ENCODE measurements at regions of chr4 and their contacts with region 1.

Region 1: DNA sequence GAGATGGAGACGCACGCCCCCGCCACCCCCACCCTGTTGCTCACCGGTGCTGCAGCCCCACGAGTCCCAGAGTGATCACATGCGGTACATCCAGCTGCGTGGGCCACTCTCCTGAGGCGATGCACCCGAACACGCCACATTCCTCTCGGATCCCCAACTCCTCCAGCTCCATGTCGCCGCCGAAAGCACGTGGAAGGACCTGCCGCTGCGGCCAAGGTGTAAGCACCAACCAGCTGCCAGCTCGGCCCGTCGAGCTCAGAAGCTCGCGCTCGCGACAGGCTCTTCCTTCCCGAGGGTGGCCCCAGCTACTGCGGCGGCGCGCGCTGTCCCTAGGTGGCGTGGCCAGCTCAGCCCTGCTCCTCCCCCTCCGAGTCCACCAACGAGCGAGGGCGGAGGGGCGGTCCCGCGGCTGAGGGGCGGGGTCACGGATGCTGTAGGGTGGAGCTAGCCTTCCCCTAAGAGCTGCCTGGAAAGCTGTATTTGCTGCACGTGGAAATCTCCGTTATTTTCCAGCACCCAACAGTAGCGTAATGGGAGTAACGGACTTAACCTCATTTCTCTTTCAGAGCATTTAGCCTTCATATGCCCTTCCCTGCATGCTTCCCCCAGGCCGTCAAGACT is at the start of gene PPAT:
- DNase-seq: peak; percentile 99
- H3K4me3 Mint-ChIP-seq: peak within 1 kb of the TSS; percentile 98
- H3K27ac Mint-ChIP-seq: peak within 1 kb of the TSS; percentile 96
- H3K4me1 Mint-ChIP-seq: peaks cover 50% of the 10 kb centered on the region
- H3K27me3 Mint-ChIP-seq: no peaks in the 10 kb centered on the region
- total RNA-seq, gene PPAT: 35.2 to 40.6 TPM

Region 2: GRCh38 chr4:56261027-56261426 is 174.4 kb before region 1 on chr4:
- CTCF ChIA-PET with region 1: no interaction called
- intact Hi-C with region 1: no loop called
- DNase-seq: peak; percentile 56
- H3K4me3 Mint-ChIP-seq: no peak overlapping the region
- H3K27ac Mint-ChIP-seq: no peak overlapping the region
- H3K4me1 Mint-ChIP-seq: peaks cover 20% of the 10 kb centered on the region
- H3K27me3 Mint-ChIP-seq: peaks cover 9% of the 10 kb centered on the region

Region 3: DNA sequence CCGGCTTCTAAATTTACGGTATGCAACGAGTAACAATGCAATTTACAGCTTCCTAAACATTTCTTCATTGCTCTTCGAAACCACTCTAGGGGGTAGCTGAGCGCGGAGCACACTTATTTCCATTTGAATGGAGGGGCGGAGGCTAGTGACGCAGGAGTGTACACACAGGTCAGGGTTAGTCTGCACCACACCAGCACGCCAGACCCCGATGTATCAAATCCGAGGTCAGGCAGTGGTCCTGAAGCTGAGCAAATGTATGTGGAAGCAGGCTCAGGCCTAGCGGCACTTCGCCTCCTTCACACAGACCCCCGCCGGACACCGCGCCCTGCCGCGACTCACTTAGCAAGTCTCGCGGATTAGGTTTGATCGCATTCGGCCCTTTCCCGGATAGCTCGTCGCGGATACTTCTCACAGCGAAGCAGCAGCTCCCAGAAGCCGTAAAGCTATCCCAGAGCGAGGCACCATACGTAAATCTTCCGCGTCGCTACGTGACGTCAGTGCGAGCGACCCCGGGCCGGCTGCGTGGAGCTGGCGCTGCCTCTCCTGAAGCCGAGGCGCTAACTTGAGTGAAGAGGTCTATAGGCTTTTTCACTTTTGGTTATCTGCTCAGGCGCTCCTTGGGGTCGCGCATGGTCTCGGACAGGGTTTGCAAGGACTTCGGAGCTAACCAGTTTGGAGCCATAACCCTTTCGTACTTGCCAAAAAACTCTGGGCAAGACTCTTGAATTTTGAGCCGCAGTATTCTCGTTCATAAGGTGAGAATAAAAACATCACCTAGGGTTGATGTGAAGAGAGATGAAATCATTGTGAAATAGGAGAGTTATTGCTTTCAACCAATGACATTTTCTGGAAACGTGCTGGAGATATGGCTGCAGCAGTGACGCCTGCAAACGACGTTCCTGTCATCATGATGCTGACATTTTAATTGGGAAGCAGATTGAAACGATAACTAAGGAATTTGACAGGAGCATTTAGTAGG is 48.1 kb before region 1 on chr4 and contains the start of gene AASDH:
- CTCF ChIA-PET with region 1: interaction called, 6 read pairs
- intact Hi-C with region 1: loop called (anchors 1 kb)
- DNase-seq: peak; percentile 97
- H3K4me3 Mint-ChIP-seq: peak within 1 kb of the TSS; percentile 87
- H3K27ac Mint-ChIP-seq: peak within 1 kb of the TSS; percentile 95
- H3K4me1 Mint-ChIP-seq: peaks cover 39% of the 10 kb centered on the region
- H3K27me3 Mint-ChIP-seq: no peaks in the 10 kb centered on the region
- total RNA-seq, gene AASDH: 13.5 to 17.0 TPM

Region 4: DNA sequence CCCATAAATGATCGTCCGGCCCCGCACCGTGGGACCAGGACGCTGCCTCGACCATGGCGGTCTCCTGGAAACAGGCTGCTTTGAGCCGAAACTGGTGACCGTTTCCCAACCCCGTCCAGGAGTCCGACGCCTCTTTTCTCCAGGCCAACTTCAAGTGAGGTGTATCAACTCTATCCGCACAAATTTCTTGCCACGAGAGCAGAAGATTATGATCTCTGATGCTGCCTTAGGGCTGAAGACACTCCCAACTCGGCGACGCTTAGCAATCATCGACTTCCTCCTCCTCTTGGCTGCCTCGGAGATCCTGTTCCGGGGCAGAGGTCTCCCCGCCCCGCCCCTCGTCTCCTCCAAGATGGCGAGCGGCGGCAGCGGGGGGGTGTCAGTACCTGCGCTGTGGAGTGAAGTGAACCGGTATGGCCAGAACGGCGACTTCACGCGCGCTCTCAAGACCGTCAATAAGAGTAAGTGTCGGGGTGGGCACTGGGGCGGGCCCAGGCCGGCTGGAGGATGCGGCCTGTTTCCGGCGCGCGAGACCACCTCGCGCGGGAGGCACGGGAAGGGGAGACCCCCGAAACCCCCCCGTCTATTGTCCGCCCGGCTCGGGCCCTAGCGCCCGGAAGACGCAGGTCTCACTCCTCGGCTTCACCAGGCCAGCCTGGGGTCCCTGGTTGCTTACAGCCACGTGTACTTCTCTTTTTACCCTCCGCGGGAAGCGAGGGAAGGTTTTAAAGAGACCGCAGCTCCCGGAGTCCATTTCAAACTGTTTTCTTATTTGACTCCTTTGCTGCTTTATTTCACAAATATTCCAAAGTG is 32.1 kb after region 1 on chr4 and contains the start of gene SRP72:
- CTCF ChIA-PET with region 1: interaction called, 6 read pairs
- intact Hi-C with region 1: loop called (anchors 1 kb)
- DNase-seq: peak; percentile 91
- H3K4me3 Mint-ChIP-seq: peak within 1 kb of the TSS; percentile 100
- H3K27ac Mint-ChIP-seq: peak within 1 kb of the TSS; percentile 97
- H3K4me1 Mint-ChIP-seq: peaks cover 33% of the 10 kb centered on the region
- H3K27me3 Mint-ChIP-seq: no peaks in the 10 kb centered on the region
- total RNA-seq, gene SRP72: 200 to 212 TPM

Region 5: DNA sequence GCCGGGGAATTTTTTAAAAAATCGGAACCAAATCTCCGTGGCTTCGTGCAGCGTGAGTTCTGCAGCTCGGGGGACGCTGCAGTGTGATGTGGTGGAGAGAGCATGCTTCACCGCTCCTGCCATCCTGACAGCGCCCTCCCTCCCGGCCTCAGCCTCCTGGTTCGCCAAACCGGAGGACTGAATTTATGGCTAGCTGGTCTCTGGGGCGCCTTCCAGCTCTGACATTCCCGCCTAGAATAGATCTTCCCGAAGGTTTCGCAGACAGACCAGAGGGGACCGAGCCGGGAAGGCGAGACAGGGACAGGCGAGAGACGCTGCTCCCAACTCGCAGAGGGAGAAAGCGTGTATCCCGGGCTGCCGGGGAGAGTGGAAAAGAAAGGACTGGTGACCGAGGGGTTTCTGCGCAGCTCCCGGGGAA is 219.8 kb after region 1 on chr4:
- CTCF ChIA-PET with region 1: no interaction called
- intact Hi-C with region 1: loop called (anchors 2 kb)
- DNase-seq: peak; percentile 21
- H3K4me3 Mint-ChIP-seq: peak overlapping the region; percentile 81
- H3K27ac Mint-ChIP-seq: peak overlapping the region; percentile 62
- H3K4me1 Mint-ChIP-seq: peaks cover 51% of the 10 kb centered on the region
- H3K27me3 Mint-ChIP-seq: peaks cover 42% of the 10 kb centered on the region

Region 6: DNA sequence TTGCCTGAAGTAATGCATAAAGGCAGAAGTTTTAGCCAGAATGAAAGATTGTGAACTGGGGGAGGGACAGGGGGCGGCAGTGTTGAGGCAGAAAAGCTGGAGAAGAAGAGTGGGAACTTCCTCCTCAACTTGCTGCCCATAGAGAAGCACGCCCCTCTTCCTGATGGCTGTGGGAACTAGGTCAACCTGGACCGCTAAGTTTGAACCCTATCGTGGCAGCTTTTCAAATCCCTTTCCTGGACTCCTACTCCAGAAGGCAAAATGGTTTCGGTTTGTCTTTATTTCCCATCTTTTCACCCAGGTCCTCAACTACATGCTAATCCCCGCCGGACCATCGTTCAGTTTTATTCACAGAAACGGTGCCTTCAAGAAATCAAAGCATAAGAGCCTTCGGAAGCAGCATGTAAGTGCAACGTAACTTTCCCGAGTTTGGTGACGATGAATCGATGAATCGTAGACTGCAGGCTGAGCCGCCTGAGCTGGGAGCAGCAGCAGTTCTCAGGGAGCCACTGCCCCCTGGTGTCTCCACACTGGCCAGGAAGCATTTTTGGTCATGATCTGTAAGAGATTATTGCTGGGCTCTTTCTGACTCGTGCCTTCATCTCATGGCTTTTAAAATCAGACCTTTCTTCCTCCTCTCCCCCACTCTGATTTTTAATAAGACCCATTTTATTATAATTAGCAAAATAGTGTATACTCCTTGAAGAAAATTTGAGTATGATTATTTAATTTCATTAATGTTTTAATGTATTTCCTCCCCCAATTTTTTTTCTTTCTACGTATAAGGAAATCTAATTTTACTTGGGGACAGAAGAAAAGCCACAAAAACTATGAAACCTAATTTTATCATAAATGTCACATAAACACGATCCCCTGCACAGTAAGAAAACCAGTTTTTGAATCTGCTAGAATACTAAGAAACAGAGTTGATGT is 364.7 kb after region 1 on chr4:
- CTCF ChIA-PET with region 1: no interaction called
- intact Hi-C with region 1: no loop called
- DNase-seq: peak; percentile 94
- H3K4me3 Mint-ChIP-seq: peak overlapping the region; percentile 95
- H3K27ac Mint-ChIP-seq: peak overlapping the region; percentile 73
- H3K4me1 Mint-ChIP-seq: peaks cover 12% of the 10 kb centered on the region
- H3K27me3 Mint-ChIP-seq: no peaks in the 10 kb centered on the region

Region 7: GRCh38 chr4:56907489-56908205 is 472.2 kb after region 1 on chr4 and contains the start of gene REST:
- CTCF ChIA-PET with region 1: interaction called, 3 read pairs
- intact Hi-C with region 1: loop called (anchors 1 kb)
- DNase-seq: peak; percentile 64
- H3K4me3 Mint-ChIP-seq: peak within 1 kb of the TSS; percentile 81
- H3K27ac Mint-ChIP-seq: peak within 1 kb of the TSS; percentile 65
- H3K4me1 Mint-ChIP-seq: peaks cover 43% of the 10 kb centered on the region
- H3K27me3 Mint-ChIP-seq: no peaks in the 10 kb centered on the region
- total RNA-seq, gene REST: 35.6 to 36.8 TPM

Measured in activated naive CD4-positive, alpha-beta T cell treated with anti-CD3 and anti-CD28 coated beads for 36 hours (primary cell).